Naive thymus-derived CD4-positive, alpha-beta T cell (primary cell): ENCODE measurements at regions of chr12 and their contacts with region 1.

Region 1: DNA sequence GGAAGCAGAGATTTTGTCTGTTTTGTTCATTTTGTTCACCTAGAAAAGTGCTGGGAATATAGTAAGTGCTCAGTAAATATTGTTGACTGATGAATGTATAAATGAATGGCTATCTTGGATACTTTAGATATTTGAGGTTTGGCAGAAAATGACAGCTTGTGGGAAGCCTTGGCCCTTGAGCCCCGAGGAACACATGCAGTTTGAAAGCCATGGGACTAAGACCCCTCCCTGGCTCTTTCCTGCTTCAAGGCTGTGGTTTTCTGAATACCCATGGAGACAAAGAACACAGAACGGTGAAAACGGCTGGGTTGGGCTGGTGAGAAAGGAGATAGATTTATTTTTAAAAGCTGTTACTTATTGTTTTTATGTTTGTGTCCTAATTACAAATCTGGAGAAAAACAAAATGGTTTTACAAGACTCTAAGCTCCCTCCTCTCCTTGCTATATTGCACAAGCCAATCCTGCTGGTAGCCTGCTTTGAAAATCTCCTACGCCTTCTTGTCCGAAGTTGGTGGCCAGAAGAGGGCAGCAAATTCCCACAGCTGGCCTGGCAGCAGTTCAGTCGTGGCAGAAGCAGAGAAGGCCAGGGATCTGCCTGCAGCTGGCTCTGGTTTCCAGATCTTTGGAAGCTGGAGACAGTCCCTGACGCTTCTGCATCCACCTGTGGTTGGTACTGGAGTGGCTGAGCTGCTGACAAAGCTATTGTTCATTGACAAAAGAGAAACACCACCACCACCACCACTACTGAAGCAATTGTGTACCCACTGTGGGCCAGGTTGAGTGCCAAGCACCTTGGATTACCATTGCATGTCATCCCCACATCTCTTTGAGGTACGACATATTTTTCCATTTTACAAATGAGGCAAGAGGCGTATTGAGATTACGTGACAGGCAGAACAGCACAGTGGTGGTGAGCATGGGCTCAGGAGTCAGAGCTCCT is 5.2 kb upstream of the KRT85 start:
- DNase-seq: peak in 7 of 9 donors; percentile 30 to 60 (median 42)
- ATAC-seq: peak; percentile 70
- H3K4me3 ChIP-seq: no peak overlapping the region
- H3K4me3 Mint-ChIP-seq: no peak overlapping the region
- H3K27ac ChIP-seq: no peak overlapping the region
- H3K27ac Mint-ChIP-seq: no peak overlapping the region
- H3K4me1 ChIP-seq: no peaks in the 10 kb centered on the region
- H3K4me1 Mint-ChIP-seq: no peaks in the 10 kb centered on the region
- H3K27me3 ChIP-seq: no peaks in the 10 kb centered on the region
- H3K27me3 Mint-ChIP-seq: peaks cover 2 to 31% (median 10%) of the 10 kb centered on the region in 5 donors

Region 2: GRCh38 chr12:52338241-52338960 is 34.1 kb before region 1 on chr12:
- CTCF ChIA-PET with region 1: no interaction called
- POLR2A ChIA-PET with region 1: no interaction called
- intact Hi-C with region 1: no loop called
- DNase-seq: no peak
- ATAC-seq: no peak
- H3K4me3 ChIP-seq: no peak overlapping the region
- H3K4me3 Mint-ChIP-seq: no peak overlapping the region
- H3K27ac ChIP-seq: no peak overlapping the region
- H3K27ac Mint-ChIP-seq: peak overlapping the region in 1 of 9 donors; percentile 32
- H3K4me1 ChIP-seq: no peaks in the 10 kb centered on the region
- H3K4me1 Mint-ChIP-seq: no peaks in the 10 kb centered on the region
- H3K27me3 ChIP-seq: no peaks in the 10 kb centered on the region
- H3K27me3 Mint-ChIP-seq: peaks cover 0 to 21% (median 12%) of the 10 kb centered on the region in 5 donors

Region 3: GRCh38 chr12:52362118-52362726 is 10.3 kb before region 1 on chr12:
- CTCF ChIA-PET with region 1: interaction called, 10 read pairs
- POLR2A ChIA-PET with region 1: no interaction called
- intact Hi-C with region 1: no loop called
- DNase-seq: no peak
- ATAC-seq: no peak
- H3K4me3 ChIP-seq: no peak overlapping the region
- H3K4me3 Mint-ChIP-seq: no peak overlapping the region
- H3K27ac ChIP-seq: no peak overlapping the region
- H3K27ac Mint-ChIP-seq: no peak overlapping the region
- H3K4me1 ChIP-seq: peaks cover 14 to 16% of the 10 kb centered on the region in 2 donors
- H3K4me1 Mint-ChIP-seq: peaks cover 13 to 29% (median 23%) of the 10 kb centered on the region in 7 donors
- H3K27me3 ChIP-seq: no peaks in the 10 kb centered on the region
- H3K27me3 Mint-ChIP-seq: peaks cover 0 to 16% (median 2%) of the 10 kb centered on the region in 5 donors

Region 4: DNA sequence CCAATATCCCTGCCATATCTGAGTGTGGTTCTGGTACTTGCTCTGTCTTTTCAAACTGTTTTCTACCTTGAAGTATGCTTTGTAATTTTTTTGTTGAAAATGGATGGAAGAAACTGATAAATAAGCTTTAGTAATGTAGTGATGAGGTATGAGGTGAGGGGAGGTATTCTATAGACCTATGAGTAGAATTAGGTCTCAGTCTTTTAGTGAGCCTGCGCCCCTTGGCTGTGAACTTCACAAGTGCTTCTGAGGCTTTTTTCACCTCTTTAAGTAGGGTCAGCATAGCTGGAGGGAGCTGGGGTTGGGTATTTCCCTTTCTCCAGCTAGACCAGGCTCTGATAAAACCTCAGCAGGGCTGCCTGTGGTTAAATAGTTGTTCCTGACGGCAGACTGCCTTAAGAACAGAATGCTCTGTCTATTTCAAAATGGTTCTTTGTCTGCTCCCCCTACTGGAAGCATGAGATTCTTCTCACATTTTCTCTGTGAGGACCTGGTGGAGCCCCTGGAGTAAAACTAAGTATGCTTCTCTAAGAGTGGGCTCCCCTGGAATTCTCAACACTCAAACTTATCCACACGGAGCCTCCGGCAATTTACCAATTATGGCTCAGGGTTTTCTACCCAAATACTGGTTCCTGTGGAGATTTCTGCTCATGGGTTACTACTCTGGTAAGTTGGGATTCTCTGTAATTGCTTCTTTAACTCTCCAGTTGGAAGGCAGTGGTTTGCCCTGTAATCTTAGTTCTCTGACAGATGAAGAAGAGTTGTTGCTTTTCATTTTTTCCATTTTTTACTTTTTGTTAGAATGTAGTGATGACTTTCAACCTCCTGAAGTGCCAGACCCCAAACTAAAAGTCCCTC is 134.6 kb after region 1 on chr12:
- CTCF ChIA-PET with region 1: no interaction called
- POLR2A ChIA-PET with region 1: no interaction called
- intact Hi-C with region 1: loop called in 1 of 2 experiments (anchors 10 kb)
- DNase-seq: peak in 5 of 9 donors; percentile 13 to 37 (median 26)
- ATAC-seq: peak; percentile 60
- H3K4me3 ChIP-seq: no peak overlapping the region
- H3K4me3 Mint-ChIP-seq: no peak overlapping the region
- H3K27ac ChIP-seq: no peak overlapping the region
- H3K27ac Mint-ChIP-seq: no peak overlapping the region
- H3K4me1 ChIP-seq: no peaks in the 10 kb centered on the region
- H3K4me1 Mint-ChIP-seq: peaks cover 0 to 3% (median 0%) of the 10 kb centered on the region in 7 donors
- H3K27me3 ChIP-seq: no peaks in the 10 kb centered on the region
- H3K27me3 Mint-ChIP-seq: peaks cover 18 to 49% (median 36%) of the 10 kb centered on the region in 5 donors

Region 5: DNA sequence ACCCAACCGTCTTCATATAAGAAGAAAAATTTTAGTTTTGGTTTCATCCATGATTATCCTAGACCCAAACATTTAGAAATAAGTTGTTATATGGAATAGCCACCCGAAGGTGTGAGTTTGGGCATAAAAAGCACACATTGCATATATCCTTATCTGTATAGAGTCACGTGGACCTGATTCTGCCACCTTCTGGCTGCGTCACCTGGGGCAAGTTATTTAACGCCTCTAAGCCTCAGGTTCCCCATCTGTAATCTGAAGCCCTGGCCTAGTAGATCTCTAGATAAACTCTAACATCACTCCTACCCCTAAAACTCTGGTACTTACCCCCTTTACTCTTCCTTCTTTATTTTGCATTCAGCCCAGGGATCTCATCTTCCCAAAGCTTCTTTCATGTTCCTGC is 162.0 kb after region 1 on chr12:
- CTCF ChIA-PET with region 1: no interaction called
- POLR2A ChIA-PET with region 1: no interaction called
- intact Hi-C with region 1: no loop called
- DNase-seq: no peak
- ATAC-seq: no peak
- H3K4me3 ChIP-seq: no peak overlapping the region
- H3K4me3 Mint-ChIP-seq: no peak overlapping the region
- H3K27ac ChIP-seq: no peak overlapping the region
- H3K27ac Mint-ChIP-seq: no peak overlapping the region
- H3K4me1 ChIP-seq: no peaks in the 10 kb centered on the region
- H3K4me1 Mint-ChIP-seq: peaks cover 0 to 7% (median 0%) of the 10 kb centered on the region in 7 donors
- H3K27me3 ChIP-seq: no peaks in the 10 kb centered on the region
- H3K27me3 Mint-ChIP-seq: peaks cover 0 to 3% (median 0%) of the 10 kb centered on the region in 5 donors